Upper lobe of right lung (tissue), 1 donor: ENCODE measurements at regions of chr5 and their contacts with region 1.

Region 1: GRCh38 chr5:105131045-105131444 is 1568.5 kb upstream of the NUDT12 start:
- DNase-seq: no peak
- ATAC-seq: no peak
- H3K4me3 ChIP-seq: no peak overlapping the region
- H3K27ac ChIP-seq: no peak overlapping the region
- H3K4me1 ChIP-seq: no peaks in the 10 kb centered on the region
- H3K27me3 ChIP-seq: no peaks in the 10 kb centered on the region
- CTCF ChIP-seq: no peak

Region 2: DNA sequence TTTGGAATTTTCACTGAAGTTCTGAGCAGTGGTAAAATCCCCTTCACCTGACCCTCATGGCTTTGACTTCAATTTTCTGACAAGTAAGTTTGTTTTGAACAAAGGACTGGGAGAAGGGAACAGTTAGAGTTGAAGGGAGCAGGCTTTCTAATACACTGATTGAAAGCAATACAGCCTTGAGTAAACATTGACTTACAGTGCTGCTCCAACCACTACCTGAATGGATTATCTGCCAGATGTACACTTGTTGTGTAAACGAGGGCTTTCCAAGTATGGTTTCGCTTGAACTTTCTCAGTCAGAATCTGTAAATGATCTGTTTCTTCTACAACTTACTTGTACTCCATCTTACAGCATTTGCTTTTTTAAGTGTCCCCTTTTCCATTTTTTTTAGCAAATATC is 153.5 kb before region 1 on chr5:
- intact Hi-C with region 1: no loop called
- DNase-seq: no peak
- ATAC-seq: no peak
- H3K4me3 ChIP-seq: no peak overlapping the region
- H3K27ac ChIP-seq: no peak overlapping the region
- H3K4me1 ChIP-seq: no peaks in the 10 kb centered on the region
- H3K27me3 ChIP-seq: no peaks in the 10 kb centered on the region
- CTCF ChIP-seq: no peak

Region 3: DNA sequence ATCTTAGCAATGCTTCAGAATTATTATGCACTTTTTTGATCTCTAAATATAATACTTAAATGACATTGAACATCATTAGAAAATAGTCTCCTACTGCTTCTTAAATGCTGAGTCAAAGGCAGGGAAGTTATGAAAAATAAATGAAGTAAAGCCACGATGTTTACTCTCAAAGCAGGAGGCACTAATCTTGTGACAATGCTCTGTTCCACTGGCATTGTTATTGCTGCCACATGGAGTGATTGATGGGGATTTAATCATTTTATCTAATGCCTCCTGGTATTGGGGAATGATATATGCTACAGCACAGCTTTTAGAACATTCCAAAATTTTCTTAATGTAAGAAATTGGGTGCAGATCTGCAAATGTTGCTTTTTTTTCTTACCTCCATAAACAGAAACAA is 87.0 kb after region 1 on chr5:
- intact Hi-C with region 1: no loop called
- DNase-seq: no peak
- ATAC-seq: no peak
- H3K4me3 ChIP-seq: no peak overlapping the region
- H3K27ac ChIP-seq: no peak overlapping the region
- H3K4me1 ChIP-seq: no peaks in the 10 kb centered on the region
- H3K27me3 ChIP-seq: no peaks in the 10 kb centered on the region
- CTCF ChIP-seq: no peak

Region 4: DNA sequence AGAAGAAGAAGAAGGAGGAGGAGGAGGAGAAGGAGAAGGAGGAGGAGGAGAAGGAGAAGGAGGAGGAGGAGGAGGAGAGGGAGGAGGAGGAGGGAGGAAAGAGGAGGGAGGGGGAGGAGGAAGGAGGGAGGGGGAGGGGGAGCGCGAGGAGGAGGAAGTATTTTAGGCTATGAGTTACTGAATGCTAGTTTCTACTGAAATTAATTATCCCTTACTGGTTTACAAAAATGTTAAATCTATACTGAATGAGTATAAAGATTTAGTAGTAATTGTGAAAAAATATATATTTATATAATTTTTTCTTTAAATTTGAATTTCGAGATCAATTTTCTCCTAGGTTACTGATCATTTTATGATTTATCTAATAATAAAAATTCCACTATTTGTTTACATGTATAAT is 200.5 kb after region 1 on chr5:
- intact Hi-C with region 1: loop called (anchors 5 kb)
- DNase-seq: no peak
- ATAC-seq: no peak
- H3K4me3 ChIP-seq: no peak overlapping the region
- H3K27ac ChIP-seq: no peak overlapping the region
- H3K4me1 ChIP-seq: no peaks in the 10 kb centered on the region
- H3K27me3 ChIP-seq: no peaks in the 10 kb centered on the region
- CTCF ChIP-seq: no peak

Region 5: DNA sequence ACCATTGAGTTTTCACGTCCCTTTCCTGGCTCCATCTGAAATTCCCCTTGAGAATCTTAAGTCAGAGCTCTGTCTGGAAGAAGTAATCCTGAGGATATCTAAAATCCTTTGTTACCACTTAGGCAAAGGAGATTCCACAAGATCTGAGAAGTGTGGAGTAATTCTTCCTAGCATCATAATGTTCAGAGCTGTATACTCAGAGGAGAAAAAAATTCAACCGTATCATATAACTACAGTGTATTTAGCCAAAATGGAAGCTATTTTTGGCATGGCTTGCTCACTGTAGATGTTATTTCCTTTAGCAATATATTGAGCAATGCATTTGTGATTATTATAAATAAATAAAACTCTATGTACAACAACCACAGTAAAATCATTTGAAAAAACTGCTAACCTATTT is 681.3 kb after region 1 on chr5:
- intact Hi-C with region 1: no loop called
- DNase-seq: no peak
- ATAC-seq: no peak
- H3K4me3 ChIP-seq: no peak overlapping the region
- H3K27ac ChIP-seq: no peak overlapping the region
- H3K4me1 ChIP-seq: no peaks in the 10 kb centered on the region
- H3K27me3 ChIP-seq: no peaks in the 10 kb centered on the region
- CTCF ChIP-seq: no peak